Aorta (tissue), 5 donors: ENCODE measurements at regions of chr18 and their contacts with region 1.

Region 1: GRCh38 chr18:13420969-13421686 is 202.6 kb downstream of the LDLRAD4 start:
- DNase-seq: no peak
- ATAC-seq: no peak
- H3K4me3 ChIP-seq: no peak overlapping the region
- H3K27ac ChIP-seq: no peak overlapping the region
- H3K4me1 ChIP-seq: peaks cover under 1 to 2% of the 10 kb centered on the region in 2 donors
- H3K27me3 ChIP-seq: no peaks in the 10 kb centered on the region

Region 2: DNA sequence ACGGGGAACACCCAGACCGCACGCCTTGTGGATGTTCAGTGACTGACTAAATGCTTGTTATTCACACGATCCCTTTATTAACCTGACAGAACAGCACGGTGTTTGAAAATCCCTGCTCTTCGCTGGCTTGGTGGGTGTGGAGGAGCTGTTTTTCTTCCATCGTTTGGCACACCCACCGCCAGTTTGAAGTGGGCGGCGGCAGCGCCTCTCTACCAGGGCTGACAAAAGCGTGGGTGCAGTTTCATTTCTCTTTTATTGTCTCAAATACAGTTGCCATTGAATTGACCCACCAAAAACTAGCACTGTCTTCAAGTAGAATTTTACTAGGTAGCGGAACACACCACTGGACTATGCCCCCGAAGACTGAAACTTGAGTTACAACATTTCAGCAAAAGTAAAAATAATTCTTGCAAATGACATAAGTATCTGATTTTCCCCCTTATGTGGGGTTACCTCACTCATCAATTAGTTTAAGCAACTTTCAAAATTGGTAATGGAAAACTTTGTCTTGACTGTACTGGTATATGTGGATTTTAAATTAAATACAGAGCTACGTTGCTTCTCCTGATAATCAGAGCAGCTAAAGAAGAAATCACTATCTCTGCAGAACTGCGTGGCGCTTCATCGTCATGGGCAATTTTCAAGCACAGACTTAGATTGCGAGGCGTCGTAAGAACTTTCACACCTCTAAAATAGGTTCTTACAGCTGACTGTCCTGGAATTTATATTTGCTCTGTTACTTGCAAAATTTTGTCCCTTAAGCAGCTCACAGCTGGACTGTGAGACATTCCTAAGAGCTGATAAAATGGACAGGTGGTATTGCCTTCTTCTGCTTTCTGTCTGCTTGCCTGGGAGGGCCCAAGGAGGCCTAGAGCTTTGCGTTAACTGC is 141.7 kb before region 1 on chr18:
- intact Hi-C with region 1: no loop called
- DNase-seq: peak in 1 of 2 donors; percentile 42
- ATAC-seq: no peak
- H3K4me3 ChIP-seq: no peak overlapping the region
- H3K27ac ChIP-seq: no peak overlapping the region
- H3K4me1 ChIP-seq: peaks cover under 1 to 3% of the 10 kb centered on the region in 2 donors
- H3K27me3 ChIP-seq: no peaks in the 10 kb centered on the region

Region 3: DNA sequence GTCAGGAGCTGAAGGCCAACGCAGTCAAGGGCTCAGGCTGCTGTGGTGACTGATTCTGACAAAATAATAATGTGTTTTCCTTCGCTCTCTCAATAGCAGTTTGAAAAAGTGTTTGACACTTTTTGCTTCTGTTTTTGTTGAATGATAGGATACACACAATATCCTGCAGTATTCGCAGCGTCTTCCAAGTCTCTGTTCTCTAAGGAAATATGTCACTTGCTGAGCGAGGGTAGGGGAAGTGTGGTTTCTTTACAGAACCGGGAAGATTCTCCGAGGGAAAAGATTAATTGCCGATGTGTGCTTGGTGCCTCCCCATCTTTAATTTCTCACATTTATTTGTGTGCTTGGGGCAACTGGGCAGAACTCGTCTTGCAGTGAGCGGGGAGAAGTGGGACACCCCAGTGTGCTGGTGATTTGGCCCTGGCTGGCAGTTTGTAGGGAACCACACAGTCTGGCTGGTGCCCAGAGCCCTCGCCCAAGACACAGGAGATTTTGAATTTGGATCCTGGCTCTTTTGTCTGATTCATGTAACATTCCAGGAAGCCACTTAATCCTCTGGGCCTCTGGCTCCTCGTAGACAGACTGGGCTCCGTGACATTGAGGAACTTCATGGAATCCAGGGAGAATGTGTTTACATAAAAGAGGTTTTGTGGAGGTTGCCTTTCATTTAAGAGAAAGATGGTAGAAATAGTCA is 33.1 kb before region 1 on chr18:
- intact Hi-C with region 1: loop called (anchors 2 to 5 kb)
- DNase-seq: peak in 1 of 2 donors; percentile 76
- ATAC-seq: no peak
- H3K4me3 ChIP-seq: no peak overlapping the region
- H3K27ac ChIP-seq: peak overlapping the region in 1 of 2 donors; percentile 7
- H3K4me1 ChIP-seq: peaks cover 2% of the 10 kb centered on the region in 2 donors
- H3K27me3 ChIP-seq: no peaks in the 10 kb centered on the region